ENCODE measurements at regions of chr2 and their contacts with region 1.

Region 1: GRCh38 chr2:206693399-206694137 is 24.6 kb downstream of the DYTN start:
- DNase-seq: peak; percentile 75
- ATAC-seq: peak; percentile 94
- H3K4me3 ChIP-seq: no peak overlapping the region
- H3K27ac ChIP-seq: no peak overlapping the region
- H3K4me1 ChIP-seq: no peaks in the 10 kb centered on the region
- H3K27me3 ChIP-seq: no peaks in the 10 kb centered on the region
- CTCF ChIP-seq: peak; percentile 49 to 79 (median 78); a peak in 4 of 6 replicates
- POLR2A ChIP-seq: no peak
- RAD21 ChIP-seq: peak; percentile 89

Region 2: DNA sequence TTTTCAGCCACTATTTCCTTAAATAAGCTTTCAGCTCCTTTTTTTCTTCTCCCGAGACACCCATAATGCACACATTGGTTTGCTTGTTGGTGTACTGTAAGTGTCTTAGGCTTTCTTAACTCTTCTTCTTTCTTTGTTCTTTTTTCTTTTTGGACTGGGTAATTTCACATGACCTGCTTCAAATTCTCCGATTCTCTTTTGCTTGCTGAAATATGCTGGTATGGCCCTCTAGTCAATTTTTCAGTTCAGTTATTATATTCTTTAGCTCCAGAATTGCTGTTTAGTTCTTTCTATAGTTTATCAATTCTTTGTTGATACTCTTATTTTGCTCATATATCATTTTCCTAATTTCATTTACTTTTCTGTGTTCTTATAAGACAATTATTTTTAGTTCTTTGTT is 87.1 kb after region 1 on chr2:
- CTCF ChIA-PET with region 1: interaction called, 5 read pairs
- POLR2A ChIA-PET with region 1: no interaction called
- RAD21 ChIA-PET with region 1: no interaction called
- intact Hi-C with region 1: loop called (anchors 1 kb)
- DNase-seq: no peak
- ATAC-seq: no peak
- H3K4me3 ChIP-seq: no peak overlapping the region
- H3K27ac ChIP-seq: no peak overlapping the region
- H3K4me1 ChIP-seq: no peaks in the 10 kb centered on the region
- H3K27me3 ChIP-seq: no peaks in the 10 kb centered on the region
- CTCF ChIP-seq: no peak
- POLR2A ChIP-seq: no peak
- RAD21 ChIP-seq: no peak

Region 3: DNA sequence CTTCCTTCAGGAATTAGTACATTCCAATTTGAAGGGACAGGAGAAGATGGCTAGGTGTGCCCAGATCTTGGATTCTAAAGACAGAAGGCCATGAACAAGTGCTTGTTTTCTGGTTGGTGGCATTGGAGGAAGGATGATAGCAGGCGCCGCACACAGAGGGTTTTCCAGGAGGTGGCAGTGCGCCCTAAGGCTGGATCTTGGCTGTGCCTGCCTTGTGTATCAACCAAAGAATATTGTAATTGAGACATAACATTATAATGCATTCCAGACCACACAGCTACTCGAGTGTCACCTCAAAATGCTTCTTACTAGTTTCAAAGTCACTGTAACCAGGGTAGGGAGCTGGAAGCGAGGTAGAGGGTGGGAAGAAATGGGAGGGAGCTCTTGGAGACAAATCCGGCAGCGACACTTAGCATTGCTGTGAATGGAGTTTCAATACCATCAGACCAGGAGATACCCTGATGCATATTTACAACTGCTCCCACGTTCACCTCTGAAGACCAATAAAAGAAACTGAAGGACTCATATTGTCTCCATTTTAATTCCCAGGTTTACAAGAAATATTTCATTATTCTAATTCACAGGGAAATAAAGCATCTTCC is 288.3 kb after region 1 on chr2:
- CTCF ChIA-PET with region 1: no interaction called
- POLR2A ChIA-PET with region 1: no interaction called
- RAD21 ChIA-PET with region 1: no interaction called
- intact Hi-C with region 1: loop called (anchors 5 kb)
- DNase-seq: peak; percentile 36
- ATAC-seq: peak; percentile 91
- H3K4me3 ChIP-seq: no peak overlapping the region
- H3K27ac ChIP-seq: no peak overlapping the region
- H3K4me1 ChIP-seq: no peaks in the 10 kb centered on the region
- H3K27me3 ChIP-seq: no peaks in the 10 kb centered on the region
- CTCF ChIP-seq: peak; percentile 75 to 83 (median 78)
- POLR2A ChIP-seq: no peak
- RAD21 ChIP-seq: peak; percentile 96

Region 4: DNA sequence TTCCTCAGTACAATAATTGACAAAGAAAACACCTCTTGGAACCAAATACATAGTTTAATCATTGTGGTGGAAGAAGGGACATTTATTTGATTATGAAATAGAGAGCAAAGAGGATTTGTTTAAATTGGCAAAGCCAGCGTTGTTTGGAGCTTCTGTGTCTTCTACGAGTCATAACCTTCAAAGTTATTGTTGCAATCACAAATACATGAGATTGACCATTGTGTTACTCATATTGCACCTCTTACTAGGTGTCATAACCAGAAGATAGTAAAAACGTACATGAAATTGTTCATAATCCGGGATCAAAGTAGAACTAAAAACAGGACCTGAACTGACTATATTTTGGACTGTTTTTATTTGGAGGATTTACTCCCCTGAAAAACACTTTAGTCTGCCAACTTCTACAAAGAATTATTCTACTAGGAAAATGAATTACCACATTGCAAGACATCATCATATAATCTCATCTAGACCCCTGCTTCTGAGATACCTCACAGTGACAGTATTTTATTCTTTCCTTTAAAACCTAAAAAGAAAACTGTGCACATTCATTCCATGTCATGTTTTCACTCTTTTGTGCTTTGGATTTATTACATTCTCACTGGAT is 623.9 kb after region 1 on chr2:
- CTCF ChIA-PET with region 1: no interaction called
- POLR2A ChIA-PET with region 1: no interaction called
- RAD21 ChIA-PET with region 1: no interaction called
- intact Hi-C with region 1: no loop called
- DNase-seq: peak; percentile 33
- ATAC-seq: no peak; the same call in 1 of the 2 replicates
- H3K4me3 ChIP-seq: no peak overlapping the region
- H3K27ac ChIP-seq: no peak overlapping the region
- H3K4me1 ChIP-seq: peaks cover 0 to 12% of the 10 kb centered on the region in 2 experiments; a peak in 2 of 4 replicates
- H3K27me3 ChIP-seq: no peaks in the 10 kb centered on the region
- CTCF ChIP-seq: no peak
- POLR2A ChIP-seq: no peak
- RAD21 ChIP-seq: no peak

Region 5: GRCh38 chr2:207725873-207726578 is 1032.5 kb after region 1 on chr2:
- CTCF ChIA-PET with region 1: no interaction called
- POLR2A ChIA-PET with region 1: no interaction called
- RAD21 ChIA-PET with region 1: no interaction called
- intact Hi-C with region 1: loop called (anchors 10 kb)
- DNase-seq: no peak
- ATAC-seq: no peak
- H3K4me3 ChIP-seq: no peak overlapping the region
- H3K27ac ChIP-seq: no peak overlapping the region
- H3K4me1 ChIP-seq: peaks cover 48 to 60% of the 10 kb centered on the region in 2 experiments
- H3K27me3 ChIP-seq: no peaks in the 10 kb centered on the region
- CTCF ChIP-seq: no peak
- POLR2A ChIP-seq: no peak
- RAD21 ChIP-seq: no peak